BJ (cell line): ENCODE measurements at regions of chr17 and their contacts with region 1.

Region 1: GRCh38 chr17:43483674-43484372 is at the start of gene DHX8:
- DNase-seq: peak; percentile 97
- H3K4me3 ChIP-seq: peak within 1 kb of the TSS; percentile 66
- H3K27me3 ChIP-seq: no peaks in the 10 kb centered on the region
- CTCF ChIP-seq: peak; percentile 100
- polyA plus RNA-seq, gene DHX8: 40.0 and 42.7 TPM in 2 replicates

Region 2: GRCh38 chr17:43367737-43368242 is 116.0 kb before region 1 on chr17:
- CTCF ChIA-PET with region 1: interaction called, 19 read pairs
- POLR2A ChIA-PET with region 1: interaction called, 12 read pairs
- DNase-seq: peak; percentile 51
- H3K4me3 ChIP-seq: peak overlapping the region; percentile 38
- H3K27me3 ChIP-seq: no peaks in the 10 kb centered on the region
- CTCF ChIP-seq: no peak

Region 3: GRCh38 chr17:43388359-43389045 is 95.3 kb before region 1 on chr17:
- CTCF ChIA-PET with region 1: interaction called, 395 read pairs
- POLR2A ChIA-PET with region 1: interaction called, 6 read pairs
- DNase-seq: peak; percentile 72
- H3K4me3 ChIP-seq: peak overlapping the region; percentile 61
- H3K27me3 ChIP-seq: no peaks in the 10 kb centered on the region
- CTCF ChIP-seq: no peak

Region 4: GRCh38 chr17:43406676-43407645 is 76.9 kb before region 1 on chr17:
- CTCF ChIA-PET with region 1: interaction called, 45 read pairs
- POLR2A ChIA-PET with region 1: interaction called, 14 read pairs
- DNase-seq: no peak
- H3K4me3 ChIP-seq: no peak overlapping the region
- H3K27me3 ChIP-seq: no peaks in the 10 kb centered on the region
- CTCF ChIP-seq: no peak

Region 5: GRCh38 chr17:43456661-43457361 is 27.0 kb before region 1 on chr17:
- CTCF ChIA-PET with region 1: interaction called, 11 read pairs
- POLR2A ChIA-PET with region 1: no interaction called
- DNase-seq: no peak
- H3K4me3 ChIP-seq: no peak overlapping the region
- H3K27me3 ChIP-seq: no peaks in the 10 kb centered on the region; the same call in 1 of the 2 replicates
- CTCF ChIP-seq: no peak